ENCODE measurements at regions of chr10 and their contacts with region 1.

Region 1: DNA sequence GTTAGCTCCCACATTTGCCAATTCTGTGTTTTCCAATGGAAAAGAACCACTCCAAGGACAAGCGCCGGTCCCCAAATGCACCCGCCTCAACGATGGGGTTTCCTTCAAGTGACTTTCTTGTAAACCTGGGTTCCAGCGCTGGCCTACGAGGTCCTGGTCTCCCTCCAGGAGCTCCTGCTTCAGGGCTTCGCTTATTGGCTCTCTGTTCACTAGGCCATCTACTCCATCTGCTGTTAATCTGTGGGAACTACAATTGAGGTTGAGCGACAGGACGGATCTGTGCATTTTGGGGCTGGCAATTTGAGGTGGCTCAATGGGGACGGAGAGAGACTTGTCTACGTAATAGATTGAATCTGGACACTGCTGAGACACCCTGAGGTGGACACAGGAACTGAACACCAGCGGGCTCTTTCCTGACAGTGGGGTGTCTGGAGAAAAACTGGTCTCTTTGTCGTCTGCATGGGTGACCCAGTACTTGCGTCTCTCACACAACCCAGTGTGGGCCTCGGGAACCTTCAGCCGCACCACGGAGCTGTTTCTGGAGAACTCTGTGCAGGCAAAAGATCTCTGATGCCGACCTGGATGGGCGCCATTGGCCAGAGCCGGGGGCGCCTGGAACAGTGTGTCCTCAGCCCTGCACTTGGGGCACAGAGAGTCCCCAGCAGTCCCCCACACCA is 115.9 kb upstream of the ADAM12 start:
- DNase-seq: peak; percentile 12
- H3K4me3 ChIP-seq: no peak overlapping the region
- H3K27ac ChIP-seq: no peak overlapping the region
- H3K4me1 ChIP-seq: no peaks in the 10 kb centered on the region
- H3K27me3 ChIP-seq: no peaks in the 10 kb centered on the region
- CTCF ChIP-seq: peak; percentile 40 to 68 (median 60)
- EP300 ChIP-seq: no peak
- POLR2A ChIP-seq: no peak

Region 2: DNA sequence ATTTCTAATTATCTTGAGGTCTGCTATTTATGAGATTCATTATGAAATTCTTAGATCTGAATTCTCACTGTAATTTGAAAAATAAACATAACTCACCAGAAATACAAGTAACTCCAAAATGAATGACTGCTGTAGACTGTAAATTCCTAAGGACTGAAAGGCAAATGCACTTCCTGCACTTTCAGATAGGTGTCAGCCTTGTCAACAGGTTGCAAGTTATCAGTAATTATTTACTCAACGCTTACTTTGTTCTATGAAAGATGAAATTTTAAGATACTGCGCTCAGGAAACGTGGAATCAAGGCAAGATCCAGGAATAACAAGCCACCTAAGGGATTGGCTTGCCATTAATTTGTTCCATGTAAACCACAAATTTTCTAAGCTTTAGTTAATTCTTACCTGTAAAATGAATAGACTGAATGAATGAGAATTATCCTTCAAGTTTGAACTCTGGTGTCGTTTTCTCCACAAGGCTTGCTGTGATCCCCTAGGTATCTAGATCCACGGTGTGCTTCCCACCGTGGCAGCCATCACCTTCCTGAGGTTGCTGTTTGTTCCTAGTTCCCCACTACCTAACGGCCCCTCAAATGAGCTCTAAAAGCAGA is 635.7 kb before region 1 on chr10:
- in situ Hi-C with region 1: loop called in 1 of 4 experiments (anchors 25 kb)
- intact Hi-C with region 1: no loop called
- DNase-seq: peak; percentile 16
- H3K4me3 ChIP-seq: no peak overlapping the region
- H3K27ac ChIP-seq: no peak overlapping the region
- H3K4me1 ChIP-seq: peaks cover 0 to 4% (median 0%) of the 10 kb centered on the region in 4 donors
- H3K27me3 ChIP-seq: no peaks in the 10 kb centered on the region
- CTCF ChIP-seq: peak; percentile 78 to 84 (median 82)
- EP300 ChIP-seq: no peak
- POLR2A ChIP-seq: no peak

Region 3: GRCh38 chr10:125976960-125977603 is 527.1 kb before region 1 on chr10:
- in situ Hi-C with region 1: loop called in 3 of 4 experiments (anchors 10 kb)
- intact Hi-C with region 1: no loop called
- DNase-seq: no peak
- H3K4me3 ChIP-seq: no peak overlapping the region
- H3K27ac ChIP-seq: no peak overlapping the region
- H3K4me1 ChIP-seq: no peaks in the 10 kb centered on the region
- H3K27me3 ChIP-seq: no peaks in the 10 kb centered on the region
- CTCF ChIP-seq: no peak
- EP300 ChIP-seq: no peak
- POLR2A ChIP-seq: no peak

Region 4: GRCh38 chr10:125982260-125982948 is 521.8 kb before region 1 on chr10:
- in situ Hi-C with region 1: loop called in 3 of 4 experiments (anchors 10 kb)
- intact Hi-C with region 1: no loop called
- DNase-seq: peak; percentile 17
- H3K4me3 ChIP-seq: no peak overlapping the region
- H3K27ac ChIP-seq: no peak overlapping the region
- H3K4me1 ChIP-seq: no peaks in the 10 kb centered on the region
- H3K27me3 ChIP-seq: no peaks in the 10 kb centered on the region
- CTCF ChIP-seq: peak; percentile 63 to 76 (median 66)
- EP300 ChIP-seq: no peak
- POLR2A ChIP-seq: no peak

Region 5: GRCh38 chr10:126478546-126478945 is 25.7 kb before region 1 on chr10:
- in situ Hi-C with region 1: no loop called
- intact Hi-C with region 1: loop called (anchors 1 kb)
- DNase-seq: no peak
- H3K4me3 ChIP-seq: no peak overlapping the region
- H3K27ac ChIP-seq: no peak overlapping the region
- H3K4me1 ChIP-seq: no peaks in the 10 kb centered on the region
- H3K27me3 ChIP-seq: no peaks in the 10 kb centered on the region
- CTCF ChIP-seq: no peak
- EP300 ChIP-seq: no peak
- POLR2A ChIP-seq: no peak

Region 6: DNA sequence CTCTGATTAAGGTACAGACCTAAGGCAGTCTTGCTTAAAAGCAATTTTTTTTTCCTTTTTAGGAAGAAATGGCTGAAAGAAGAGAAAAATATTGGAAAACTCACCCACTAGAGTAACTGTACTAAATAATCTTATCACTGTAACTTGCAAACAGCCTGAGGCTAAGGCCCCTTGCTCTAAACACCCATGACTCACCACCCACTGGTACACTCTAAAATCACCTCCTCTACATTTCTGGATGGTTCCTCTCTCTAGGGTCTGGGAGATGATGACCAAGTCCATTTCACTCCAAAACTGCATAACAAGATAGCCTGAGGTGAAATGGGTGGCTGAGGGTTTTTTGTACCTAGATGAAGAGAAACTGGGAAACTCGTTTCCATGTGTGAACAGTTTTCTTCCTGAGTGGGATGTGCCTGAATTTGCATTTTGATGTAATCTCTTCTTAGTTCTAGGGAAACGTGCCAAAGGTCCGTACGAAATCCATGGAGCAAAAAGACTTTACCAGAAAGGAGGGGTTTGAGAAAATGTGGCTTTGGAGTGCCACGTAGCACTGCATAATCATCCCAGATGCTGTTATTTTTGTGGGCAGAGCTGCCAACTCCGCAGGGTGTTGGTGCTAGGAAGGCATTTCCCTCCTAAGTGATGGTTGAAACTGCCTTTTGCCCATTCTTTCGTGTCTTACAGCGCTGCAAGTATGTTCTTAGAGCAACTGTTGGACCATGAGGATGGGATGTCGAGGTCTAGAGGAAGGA is 279.8 kb after region 1 on chr10:
- in situ Hi-C with region 1: no loop called
- intact Hi-C with region 1: no loop called
- DNase-seq: no peak
- H3K4me3 ChIP-seq: no peak overlapping the region
- H3K27ac ChIP-seq: no peak overlapping the region
- H3K4me1 ChIP-seq: no peaks in the 10 kb centered on the region
- H3K27me3 ChIP-seq: no peaks in the 10 kb centered on the region
- CTCF ChIP-seq: no peak
- EP300 ChIP-seq: no peak
- POLR2A ChIP-seq: no peak

Measured in transverse colon (tissue), 4 donors.